GM18951 (cell line): ENCODE measurements at regions of chr4 and their contacts with region 1.

Region 1: GRCh38 chr4:58940167-58940566 is 1830.0 kb upstream of the IGFBP7 start:
- POLR2A ChIP-seq: no peak

Region 2: GRCh38 chr4:59455751-59456150 is 515.6 kb after region 1 on chr4:
- in situ Hi-C with region 1: no loop called
- POLR2A ChIP-seq: no peak

Region 3: DNA sequence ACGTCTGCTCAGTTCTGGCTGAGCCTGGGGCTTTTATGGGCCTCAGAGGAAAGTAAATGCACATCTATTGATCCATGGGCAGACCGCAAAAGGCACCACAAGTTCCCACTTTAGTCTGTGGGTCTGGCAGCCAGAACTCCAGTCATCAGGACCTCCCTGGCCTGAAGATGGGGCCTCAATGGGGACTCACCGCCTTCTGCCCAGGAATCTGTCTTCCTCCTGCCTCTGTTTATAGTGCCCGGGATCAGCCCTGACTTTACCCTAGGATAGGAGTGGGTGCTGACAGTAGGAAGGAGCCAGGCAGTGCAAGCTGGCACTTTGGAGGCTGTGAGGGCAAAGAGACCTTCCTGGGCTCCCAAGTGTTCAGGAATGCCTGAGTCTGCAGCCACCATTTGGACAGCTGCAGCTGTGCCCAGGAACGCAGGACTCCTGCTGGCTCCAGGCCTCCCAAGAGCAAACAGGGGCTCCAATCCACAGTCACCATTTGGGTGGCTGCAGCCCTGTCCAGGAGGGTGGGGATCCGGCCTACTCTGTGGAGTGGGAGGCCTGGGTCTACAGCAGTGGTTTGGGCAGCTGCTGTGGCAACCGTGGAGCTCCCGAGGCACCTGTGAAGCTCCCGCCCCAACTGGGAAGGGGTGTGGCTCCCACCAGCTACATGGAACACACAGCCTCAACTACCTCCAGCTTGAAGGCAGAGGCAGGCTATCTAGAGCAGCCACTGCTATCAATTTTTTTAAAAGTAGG is 819.1 kb after region 1 on chr4:
- in situ Hi-C with region 1: loop called (anchors 25 kb)
- POLR2A ChIP-seq: no peak